ENCODE measurements at regions of chr12 and their contacts with region 1.

Region 1: DNA sequence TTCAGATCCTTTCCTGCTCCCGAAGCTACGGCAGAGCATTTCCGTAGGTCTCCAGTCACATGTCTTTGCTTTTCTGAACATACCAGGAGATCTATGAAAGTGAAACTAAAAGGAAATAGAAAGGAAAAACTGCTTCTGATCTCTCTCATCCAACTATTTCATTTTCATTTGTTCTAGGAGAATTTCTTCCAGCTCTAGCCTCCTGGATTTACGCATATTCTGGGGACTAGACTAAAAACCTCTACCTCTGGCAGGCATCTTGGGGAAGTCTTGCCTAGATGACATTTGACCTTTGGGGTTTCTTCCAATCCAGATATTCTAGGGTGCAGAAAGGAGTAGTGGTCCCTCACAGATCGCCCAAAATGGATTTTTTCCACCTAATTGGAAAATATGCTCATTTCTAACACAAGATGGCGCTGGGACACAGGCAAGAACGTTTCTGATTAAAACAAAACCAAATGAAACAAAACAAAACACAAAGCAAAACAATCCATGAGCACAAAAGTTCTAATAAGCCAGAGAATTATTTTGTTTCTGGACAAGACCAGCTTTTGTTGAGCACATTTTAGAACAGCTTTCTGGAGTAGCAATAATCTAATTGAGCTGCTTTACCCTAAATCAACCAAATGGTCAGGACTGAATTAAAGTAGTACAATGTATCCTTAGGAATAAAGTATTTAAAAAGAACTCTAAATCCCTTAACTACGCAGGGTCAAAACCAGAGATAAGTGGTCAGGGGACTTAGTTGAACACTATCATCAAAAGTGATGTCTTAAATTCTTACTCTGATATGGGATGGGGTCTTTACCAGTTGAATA is 12.3 kb upstream of the PARP11 start:
- DNase-seq: peak; percentile 36
- CTCF ChIP-seq: peak; percentile 78

Region 2: DNA sequence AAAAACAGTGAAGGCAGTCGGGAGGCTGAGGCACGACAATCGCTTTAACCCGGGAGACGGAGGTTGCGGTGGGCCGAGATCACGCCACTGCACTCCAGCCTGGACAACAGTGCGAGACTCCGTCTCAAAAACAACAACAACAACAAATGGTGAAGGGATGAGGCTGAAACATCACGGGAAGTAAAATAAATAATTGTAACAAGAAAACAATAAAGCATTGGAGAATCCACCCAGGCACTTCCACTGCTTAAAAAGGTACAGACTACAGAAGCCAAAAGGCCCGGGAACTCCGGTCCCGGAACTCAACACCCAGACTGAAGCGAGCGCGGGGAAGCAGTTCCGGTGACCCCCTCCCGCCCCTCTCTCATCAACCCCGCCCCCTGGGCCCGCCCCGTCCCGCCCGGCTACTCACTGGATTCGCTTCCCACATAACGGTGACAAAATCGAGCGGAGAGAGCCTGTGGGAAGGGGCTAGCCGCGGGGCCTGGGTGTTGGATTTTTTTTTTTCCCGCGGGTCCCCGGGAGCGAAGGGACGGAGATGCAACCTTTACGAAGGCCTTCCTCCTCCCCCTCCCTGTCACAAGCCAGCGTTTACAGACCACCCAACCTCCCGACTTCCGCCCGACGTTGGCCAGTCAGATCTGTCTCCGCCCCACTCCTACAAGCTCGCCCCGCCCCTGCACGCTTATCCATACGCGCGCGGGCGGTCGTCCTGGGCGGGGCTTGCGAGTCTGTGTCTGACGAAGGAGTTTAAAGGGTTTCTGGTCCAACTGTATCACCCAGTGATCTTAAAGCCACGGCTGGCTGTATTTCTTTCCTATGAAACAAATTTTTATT is 12.5 kb before region 1 on chr12 and contains the start of gene PARP11:
- CTCF ChIA-PET with region 1: interaction called, 24 read pairs
- POLR2A ChIA-PET with region 1: no interaction called
- DNase-seq: peak; percentile 96
- CTCF ChIP-seq: no peak

Region 3: GRCh38 chr12:3964439-3964838 is 79.0 kb after region 1 on chr12:
- CTCF ChIA-PET with region 1: interaction called, 21 read pairs
- POLR2A ChIA-PET with region 1: no interaction called
- DNase-seq: peak; percentile 44
- CTCF ChIP-seq: peak; percentile 63

Region 4: DNA sequence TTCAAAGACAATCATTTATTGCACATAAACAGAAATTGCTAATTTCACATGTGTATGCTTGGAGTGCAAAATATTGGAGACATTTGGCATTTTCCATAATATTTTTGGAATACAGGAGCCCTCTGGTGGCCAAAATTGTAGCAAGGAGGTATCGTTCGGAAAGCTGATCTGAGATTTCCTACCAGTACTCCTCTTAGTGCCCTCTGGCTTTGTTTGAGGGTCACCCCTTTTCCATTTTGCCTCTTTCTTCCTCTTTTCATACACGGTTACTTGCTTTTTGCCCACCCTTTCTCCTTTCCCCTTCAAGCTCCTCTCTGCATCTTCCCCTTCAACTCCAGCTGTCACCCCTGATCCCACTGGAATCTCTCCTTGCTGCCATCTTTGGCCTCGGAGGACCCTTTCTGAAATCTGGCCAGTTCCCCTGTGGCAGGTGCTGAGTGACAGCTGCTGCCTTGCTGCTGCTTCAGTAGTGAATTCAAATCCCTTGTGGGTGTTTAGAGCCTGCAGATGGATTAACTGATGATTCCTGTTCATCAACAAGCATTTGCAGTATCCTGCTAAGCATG is 152.3 kb after region 1 on chr12:
- CTCF ChIA-PET with region 1: interaction called, 75 read pairs
- POLR2A ChIA-PET with region 1: no interaction called
- DNase-seq: no peak
- CTCF ChIP-seq: peak; percentile 46

Measured in GM10248 (cell line).